Heart left ventricle (tissue), 16 donors: ENCODE measurements at regions of chr11 and their contacts with region 1.

Region 1: DNA sequence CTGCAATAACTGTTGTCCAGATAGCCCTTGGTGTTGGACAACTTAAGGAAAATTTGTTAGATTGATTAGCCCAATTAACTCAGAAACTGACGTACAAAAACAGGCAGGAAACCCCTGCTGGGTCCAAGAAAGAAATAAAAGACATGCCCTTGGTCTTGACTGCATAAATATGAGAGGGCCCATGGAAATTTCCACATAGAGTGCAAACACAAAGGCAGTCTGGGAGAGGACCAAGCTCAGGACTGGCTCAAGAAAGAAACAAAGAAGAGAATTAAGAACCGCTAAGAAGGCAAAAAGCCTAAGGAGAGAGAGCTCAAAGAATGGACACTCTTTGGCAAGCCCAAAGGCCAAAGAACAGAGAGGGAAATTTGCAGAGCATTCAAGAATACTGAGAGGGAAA is 1243.9 kb downstream of the LRRC4C start:
- DNase-seq: no peak
- ATAC-seq: no peak
- H3K4me3 ChIP-seq: no peak overlapping the region
- H3K27ac ChIP-seq: peak overlapping the region in 1 of 12 donors; percentile 41
- H3K4me1 ChIP-seq: no peaks in the 10 kb centered on the region
- H3K27me3 ChIP-seq: no peaks in the 10 kb centered on the region
- CTCF ChIP-seq: no peak
- POLR2A ChIP-seq: no peak

Region 2: GRCh38 chr11:39917256-39917655 is 298.3 kb before region 1 on chr11:
- intact Hi-C with region 1: no loop called
- DNase-seq: no peak
- ATAC-seq: no peak
- H3K4me3 ChIP-seq: no peak overlapping the region
- H3K27ac ChIP-seq: no peak overlapping the region
- H3K4me1 ChIP-seq: no peaks in the 10 kb centered on the region
- H3K27me3 ChIP-seq: no peaks in the 10 kb centered on the region
- CTCF ChIP-seq: no peak
- POLR2A ChIP-seq: no peak

Region 3: DNA sequence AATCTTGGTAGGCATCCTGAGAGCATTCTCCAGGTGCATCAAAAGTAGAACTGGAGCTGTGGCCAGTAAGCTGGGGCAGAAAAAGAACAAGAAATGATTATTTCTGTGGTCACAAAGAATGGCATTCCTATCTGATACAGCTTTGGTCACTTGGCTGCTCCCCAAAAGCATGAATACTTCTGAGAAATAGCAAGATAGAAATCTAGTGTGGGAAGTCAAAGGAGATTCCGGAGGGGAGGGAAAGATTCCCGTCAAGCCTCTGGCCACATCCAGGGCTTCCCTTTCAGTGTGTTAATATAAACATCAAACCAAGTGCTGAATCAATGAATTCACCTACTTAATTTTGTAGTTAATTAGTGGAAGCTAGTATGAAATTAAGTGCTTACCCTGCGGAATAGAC is 58.5 kb after region 1 on chr11:
- intact Hi-C with region 1: loop called in 1 of 10 experiments (anchors 10 kb)
- DNase-seq: no peak
- ATAC-seq: no peak
- H3K4me3 ChIP-seq: no peak overlapping the region
- H3K27ac ChIP-seq: no peak overlapping the region
- H3K4me1 ChIP-seq: no peaks in the 10 kb centered on the region
- H3K27me3 ChIP-seq: no peaks in the 10 kb centered on the region
- CTCF ChIP-seq: no peak
- POLR2A ChIP-seq: no peak